ENCODE measurements at regions of chr1 and their contacts with region 1.

Region 1: GRCh38 chr1:197775282-197776262 is at the start of gene DENND1B:
- DNase-seq: peak; percentile 78 to 80
- H3K4me3 ChIP-seq: peak within 1 kb of the TSS; percentile 97
- H3K27ac ChIP-seq: peak within 1 kb of the TSS; percentile 95
- H3K4me1 ChIP-seq: peaks cover 48% of the 10 kb centered on the region
- H3K27me3 ChIP-seq: no peaks in the 10 kb centered on the region
- CTCF ChIP-seq: peak; percentile 37; the same call in 1 of the 2 replicates
- total RNA-seq, gene DENND1B: 12.7 and 14.1 TPM in 2 replicates

Region 2: DNA sequence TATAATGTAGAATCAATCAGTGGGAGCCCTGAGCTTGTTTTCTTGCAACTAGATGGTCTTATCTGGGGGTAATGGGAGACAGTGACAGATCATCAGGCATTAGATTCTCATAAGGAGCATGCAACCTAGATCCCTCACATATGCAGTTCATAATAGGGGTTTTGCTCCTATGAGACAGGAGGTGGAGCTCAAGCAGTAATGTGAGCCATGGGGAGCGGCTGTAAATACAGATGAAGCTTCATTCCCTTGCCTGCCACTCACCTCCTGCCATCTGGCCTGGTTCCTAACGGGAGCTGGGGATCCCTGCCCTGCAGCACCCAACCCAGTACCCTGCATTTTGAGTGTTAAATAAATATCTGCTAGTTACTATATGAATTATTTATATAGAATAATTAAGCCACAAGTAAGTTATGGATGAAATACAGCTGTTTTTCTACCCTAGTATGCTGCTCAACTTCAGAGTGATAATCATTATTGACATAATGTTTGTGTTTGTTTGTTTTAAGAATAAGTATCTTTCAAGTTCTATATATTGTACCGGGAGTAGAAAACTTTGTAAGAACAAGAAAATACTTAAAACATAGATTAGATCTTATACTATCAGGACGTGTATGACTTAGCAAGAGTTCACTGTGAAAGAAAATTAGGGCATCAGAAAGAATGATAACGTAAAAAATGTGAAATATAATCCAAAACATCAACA is 187.6 kb before region 1 on chr1:
- CTCF ChIA-PET with region 1: no interaction called
- POLR2A ChIA-PET with region 1: no interaction called
- intact Hi-C with region 1: no loop called
- DNase-seq: no peak
- H3K4me3 ChIP-seq: no peak overlapping the region
- H3K27ac ChIP-seq: no peak overlapping the region
- H3K4me1 ChIP-seq: no peaks in the 10 kb centered on the region
- H3K27me3 ChIP-seq: no peaks in the 10 kb centered on the region
- CTCF ChIP-seq: no peak

Region 3: DNA sequence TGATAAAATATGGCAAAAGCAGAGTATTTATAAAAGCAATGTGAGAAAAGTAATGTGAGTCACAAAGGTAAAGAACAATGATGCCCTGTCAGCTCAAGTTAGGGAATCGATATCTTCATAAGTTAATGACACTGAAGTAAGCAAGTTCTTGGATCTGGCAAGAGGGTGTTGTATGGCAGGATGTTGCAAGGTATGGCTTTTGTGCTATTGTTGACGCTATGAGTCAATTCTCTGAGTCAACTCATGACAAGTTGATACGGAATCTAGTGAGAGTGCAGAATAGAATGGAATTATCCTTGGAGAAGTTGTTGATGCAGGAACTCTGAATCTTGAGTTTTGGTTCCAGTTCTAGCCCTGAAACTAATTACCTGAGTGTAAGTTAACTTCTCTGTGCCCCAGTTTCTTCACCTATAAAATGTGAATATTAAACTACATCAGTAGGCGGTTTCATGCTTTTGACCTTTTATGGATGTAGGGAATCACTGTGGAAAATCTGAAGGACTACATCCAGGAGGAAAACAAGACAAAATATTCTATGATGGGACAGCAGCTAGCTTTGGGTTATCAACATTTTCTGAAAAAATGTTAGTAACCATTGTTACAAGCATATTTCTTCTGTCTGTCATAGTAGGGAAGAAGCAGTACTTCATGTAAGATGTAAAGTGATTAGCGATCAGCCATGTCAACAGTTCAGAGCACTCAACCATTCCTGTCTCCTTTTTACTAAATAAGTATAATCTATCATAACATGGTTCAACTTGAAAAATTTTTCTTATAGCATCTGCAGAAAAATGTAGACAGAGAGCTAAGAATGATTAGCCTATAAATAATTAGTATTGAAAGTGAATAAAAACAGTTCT is 668.0 kb after region 1 on chr1:
- CTCF ChIA-PET with region 1: no interaction called
- POLR2A ChIA-PET with region 1: no interaction called
- intact Hi-C with region 1: loop called (anchors 10 kb)
- DNase-seq: peak; percentile 54 to 95
- H3K4me3 ChIP-seq: no peak overlapping the region
- H3K27ac ChIP-seq: peak overlapping the region; percentile 89
- H3K4me1 ChIP-seq: peaks cover 20% of the 10 kb centered on the region
- H3K27me3 ChIP-seq: no peaks in the 10 kb centered on the region
- CTCF ChIP-seq: no peak

Region 4: GRCh38 chr1:198534548-198535418 is 759.2 kb after region 1 on chr1:
- CTCF ChIA-PET with region 1: no interaction called
- POLR2A ChIA-PET with region 1: no interaction called
- intact Hi-C with region 1: no loop called
- DNase-seq: no peak
- H3K4me3 ChIP-seq: no peak overlapping the region
- H3K27ac ChIP-seq: no peak overlapping the region
- H3K4me1 ChIP-seq: no peaks in the 10 kb centered on the region
- H3K27me3 ChIP-seq: no peaks in the 10 kb centered on the region
- CTCF ChIP-seq: no peak